Caco-2 (cell line): ENCODE measurements at regions of chr1 and their contacts with region 1.

Region 1: DNA sequence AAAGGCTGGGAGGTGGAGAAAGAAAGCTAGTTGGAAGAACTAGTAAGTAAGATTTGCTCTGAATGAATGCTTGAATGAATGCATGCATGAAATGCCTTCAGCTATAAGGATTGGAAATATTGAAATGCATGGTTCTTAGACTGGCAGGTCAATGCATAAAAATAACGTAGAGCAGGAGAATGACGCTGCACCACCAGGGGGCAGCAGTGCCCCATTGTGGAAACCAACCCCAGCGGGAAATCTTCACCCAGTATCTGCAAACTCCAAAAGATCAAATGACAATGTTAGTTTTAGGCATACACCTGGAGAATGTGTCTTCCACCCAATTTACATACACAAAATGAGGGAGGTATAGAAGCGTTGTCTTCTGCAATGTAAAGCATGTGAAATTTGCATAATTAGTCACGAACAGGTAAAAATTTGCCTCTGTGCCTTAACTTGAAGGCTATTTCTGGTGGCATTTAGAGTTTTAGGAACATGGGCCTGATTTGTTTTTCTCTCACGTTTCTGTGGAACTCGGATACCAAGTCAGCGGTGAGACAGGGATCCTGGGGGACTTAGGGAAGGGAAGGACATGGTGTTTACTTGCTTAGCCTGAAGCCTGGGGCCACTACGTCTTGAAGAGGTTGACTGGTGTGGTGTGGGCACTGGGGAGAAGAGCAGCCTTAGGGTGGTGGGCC is 78.6 kb downstream of the HHAT start:
- DNase-seq: peak; percentile 50 to 82
- H3K4me3 ChIP-seq: no peak overlapping the region
- H3K4me3 Mint-ChIP-seq: no peak overlapping the region
- H3K27ac Mint-ChIP-seq: no peak overlapping the region
- H3K4me1 ChIP-seq: no peaks in the 10 kb centered on the region
- H3K4me1 Mint-ChIP-seq: no peaks in the 10 kb centered on the region
- H3K27me3 ChIP-seq: no peaks in the 10 kb centered on the region
- H3K27me3 Mint-ChIP-seq: no peaks in the 10 kb centered on the region
- CTCF ChIP-seq: peak; percentile 92 to 96

Region 2: GRCh38 chr1:210384630-210385029 is 22.7 kb before region 1 on chr1:
- CTCF ChIA-PET with region 1: no interaction called
- POLR2A ChIA-PET with region 1: no interaction called
- intact Hi-C with region 1: no loop called
- DNase-seq: no peak
- H3K4me3 ChIP-seq: no peak overlapping the region
- H3K4me3 Mint-ChIP-seq: no peak overlapping the region
- H3K27ac Mint-ChIP-seq: no peak overlapping the region
- H3K4me1 ChIP-seq: peaks cover 9% of the 10 kb centered on the region; the same call in 1 of the 2 replicates
- H3K4me1 Mint-ChIP-seq: peaks cover 10% of the 10 kb centered on the region
- H3K27me3 ChIP-seq: no peaks in the 10 kb centered on the region
- H3K27me3 Mint-ChIP-seq: no peaks in the 10 kb centered on the region
- CTCF ChIP-seq: no peak

Region 3: DNA sequence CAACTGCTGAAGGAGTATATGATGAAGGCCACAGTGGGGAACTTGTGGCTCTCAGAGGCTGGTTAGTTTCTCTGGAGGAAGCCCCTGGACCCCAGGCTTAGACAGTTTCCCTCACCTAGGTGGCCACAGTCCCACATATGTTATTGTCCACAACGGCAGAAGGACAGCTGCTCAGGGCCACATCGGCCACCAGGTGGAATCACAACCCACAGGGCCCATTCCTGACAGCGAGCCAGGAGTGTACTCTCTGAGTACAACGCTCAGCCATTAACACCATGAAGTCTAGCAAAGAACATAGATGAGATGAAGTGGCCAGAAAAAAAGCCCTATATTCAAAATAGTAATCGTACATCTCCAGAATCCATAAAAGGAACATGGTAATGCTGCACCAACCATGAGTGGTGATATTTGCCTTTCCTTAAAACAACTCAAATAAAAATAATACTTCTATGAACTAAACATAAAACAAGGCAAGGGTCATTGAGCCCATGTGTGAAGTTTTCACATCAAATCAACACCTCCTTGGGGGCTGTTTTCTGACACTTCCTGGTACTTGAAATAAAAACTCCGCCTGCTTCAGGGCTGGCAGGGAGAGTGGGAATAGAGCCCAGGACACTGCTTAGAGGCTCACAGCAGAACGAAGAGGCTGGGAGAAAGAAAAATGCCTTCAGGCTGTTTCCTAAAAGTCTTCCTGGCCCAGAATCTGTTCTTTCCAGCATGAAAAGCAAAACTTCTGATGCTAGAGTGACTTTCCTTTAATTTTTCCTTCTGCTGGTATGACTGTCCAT is 304.7 kb after region 1 on chr1:
- CTCF ChIA-PET with region 1: no interaction called
- POLR2A ChIA-PET with region 1: no interaction called
- intact Hi-C with region 1: loop called (anchors 1 kb)
- DNase-seq: peak in 1 of 2 experiments; percentile 34
- H3K4me3 ChIP-seq: no peak overlapping the region
- H3K4me3 Mint-ChIP-seq: no peak overlapping the region
- H3K27ac Mint-ChIP-seq: no peak overlapping the region
- H3K4me1 ChIP-seq: no peaks in the 10 kb centered on the region
- H3K4me1 Mint-ChIP-seq: no peaks in the 10 kb centered on the region
- H3K27me3 ChIP-seq: no peaks in the 10 kb centered on the region
- H3K27me3 Mint-ChIP-seq: peaks cover 15% of the 10 kb centered on the region
- CTCF ChIP-seq: peak; percentile 17 to 47

Region 4: GRCh38 chr1:210739627-210740026 is 332.3 kb after region 1 on chr1:
- CTCF ChIA-PET with region 1: no interaction called
- POLR2A ChIA-PET with region 1: no interaction called
- intact Hi-C with region 1: no loop called
- DNase-seq: no peak
- H3K4me3 ChIP-seq: no peak overlapping the region
- H3K4me3 Mint-ChIP-seq: no peak overlapping the region
- H3K27ac Mint-ChIP-seq: no peak overlapping the region
- H3K4me1 ChIP-seq: no peaks in the 10 kb centered on the region
- H3K4me1 Mint-ChIP-seq: no peaks in the 10 kb centered on the region
- H3K27me3 ChIP-seq: no peaks in the 10 kb centered on the region
- H3K27me3 Mint-ChIP-seq: peaks cover 19% of the 10 kb centered on the region
- CTCF ChIP-seq: no peak